Activated naive CD4-positive, alpha-beta T cell treated with anti-CD3 and anti-CD28 coated beads for 36 hours (primary cell): ENCODE measurements at regions of chr11 and their contacts with region 1.

Region 1: GRCh38 chr11:73335204-73335923 is 27.3 kb downstream of the ARHGEF17 start:
- DNase-seq: peak; percentile 87
- H3K4me3 Mint-ChIP-seq: no peak overlapping the region
- H3K27ac Mint-ChIP-seq: no peak overlapping the region
- H3K4me1 Mint-ChIP-seq: no peaks in the 10 kb centered on the region
- H3K27me3 Mint-ChIP-seq: no peaks in the 10 kb centered on the region

Region 2: DNA sequence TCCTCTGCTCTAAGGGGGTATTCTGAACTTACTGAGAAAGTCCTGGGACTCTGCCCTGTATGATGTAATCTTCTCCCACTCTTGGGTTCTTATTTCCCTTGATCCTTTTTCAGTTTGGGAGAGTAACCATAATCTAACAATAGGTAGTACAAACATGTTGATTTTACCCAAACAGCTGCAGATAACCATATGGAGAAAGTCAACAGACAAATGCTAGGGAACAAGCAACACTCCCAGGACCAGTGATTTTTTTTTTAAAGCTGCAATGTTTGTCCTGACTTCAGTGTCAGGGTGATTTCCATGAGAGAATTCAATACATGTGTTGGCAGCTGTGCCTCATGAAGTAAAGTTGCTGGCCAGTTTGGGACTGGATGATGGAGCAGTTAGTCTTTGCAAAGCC is 349.7 kb before region 1 on chr11:
- CTCF ChIA-PET with region 1: no interaction called
- intact Hi-C with region 1: no loop called
- DNase-seq: no peak
- H3K4me3 Mint-ChIP-seq: no peak overlapping the region
- H3K27ac Mint-ChIP-seq: no peak overlapping the region
- H3K4me1 Mint-ChIP-seq: peaks cover 12% of the 10 kb centered on the region
- H3K27me3 Mint-ChIP-seq: no peaks in the 10 kb centered on the region

Region 3: GRCh38 chr11:73288873-73289707 is 46.3 kb before region 1 on chr11:
- CTCF ChIA-PET with region 1: interaction called, 83 read pairs
- intact Hi-C with region 1: no loop called
- DNase-seq: peak; percentile 76
- H3K4me3 Mint-ChIP-seq: no peak overlapping the region
- H3K27ac Mint-ChIP-seq: no peak overlapping the region
- H3K4me1 Mint-ChIP-seq: peaks cover 12% of the 10 kb centered on the region
- H3K27me3 Mint-ChIP-seq: no peaks in the 10 kb centered on the region

Region 4: GRCh38 chr11:73295231-73295995 is 40.0 kb before region 1 on chr11:
- CTCF ChIA-PET with region 1: interaction called, 83 read pairs
- intact Hi-C with region 1: loop called (anchors 1 kb)
- DNase-seq: peak; percentile 90
- H3K4me3 Mint-ChIP-seq: no peak overlapping the region
- H3K27ac Mint-ChIP-seq: no peak overlapping the region
- H3K4me1 Mint-ChIP-seq: peaks cover 3% of the 10 kb centered on the region
- H3K27me3 Mint-ChIP-seq: peaks cover 4% of the 10 kb centered on the region